GM12878 (cell line): ENCODE measurements at regions of chr7 and their contacts with region 1.

Region 1: GRCh38 chr7:99918959-99919813 is at the start of gene TRIM4:
- DNase-seq: peak; percentile 77
- ATAC-seq: peak; percentile 99
- H3K4me3 ChIP-seq: peak within 1 kb of the TSS; percentile 81
- H3K27ac ChIP-seq: peak within 1 kb of the TSS; percentile 79
- H3K4me1 ChIP-seq: no peaks in the 10 kb centered on the region
- H3K27me3 ChIP-seq: no peaks in the 10 kb centered on the region
- CTCF ChIP-seq: peak; percentile 24 to 28 (median 26); a peak in 4 of 6 replicates
- EP300 ChIP-seq: no peak
- POLR2A ChIP-seq: peak; percentile 99
- RAD21 ChIP-seq: 0 out of 2 replicates have a peak, but pooled peaks have one; percentile 8
- polyA plus RNA-seq, gene TRIM4: 4.8 to 6.0 TPM

Region 2: GRCh38 chr7:99975782-99976521 is 56.8 kb after region 1 on chr7 and contains the start of gene AZGP1:
- CTCF ChIA-PET with region 1: interaction called, 22 read pairs
- POLR2A ChIA-PET with region 1: no interaction called
- RAD21 ChIA-PET with region 1: no interaction called
- SMC1A ChIA-PET with region 1: interaction called, 5 read pairs
- in situ Hi-C with region 1: no loop called
- intact Hi-C with region 1: loop called (anchors 5 kb)
- DNase-seq: no peak
- ATAC-seq: peak; percentile 68
- H3K4me3 ChIP-seq: no peak within 1 kb of the TSS
- H3K27ac ChIP-seq: no peak within 1 kb of the TSS
- H3K4me1 ChIP-seq: no peaks in the 10 kb centered on the region
- H3K27me3 ChIP-seq: no peaks in the 10 kb centered on the region
- CTCF ChIP-seq: no peak
- EP300 ChIP-seq: no peak
- POLR2A ChIP-seq: no peak
- RAD21 ChIP-seq: no peak
- polyA plus RNA-seq, gene AZGP1: not detected

Region 3: DNA sequence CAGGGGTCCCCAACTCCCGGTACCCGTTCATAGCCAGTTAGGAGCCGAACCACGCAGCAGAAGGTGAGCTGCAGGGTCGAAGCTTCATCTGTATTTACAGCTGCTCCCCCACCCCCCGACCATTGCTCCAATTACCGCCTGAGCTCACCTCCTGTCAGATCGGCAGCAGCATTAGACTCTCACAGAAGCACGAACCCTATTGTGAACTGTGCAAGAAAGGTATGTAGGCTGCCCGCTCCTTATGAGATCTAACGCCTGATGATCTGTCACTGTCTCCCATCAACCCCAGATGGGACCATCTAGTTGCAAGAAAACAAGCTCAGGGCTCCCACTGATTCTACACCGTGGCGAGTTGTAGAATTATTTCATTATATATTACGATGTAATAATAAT is 71.3 kb after region 1 on chr7:
- CTCF ChIA-PET with region 1: interaction called, 178 read pairs
- POLR2A ChIA-PET with region 1: interaction called, 5 read pairs
- RAD21 ChIA-PET with region 1: interaction called, 16 read pairs
- SMC1A ChIA-PET with region 1: interaction called, 86 read pairs
- in situ Hi-C with region 1: loop called (anchors 5 kb)
- intact Hi-C with region 1: no loop called
- DNase-seq: no peak
- ATAC-seq: no peak
- H3K4me3 ChIP-seq: no peak overlapping the region
- H3K27ac ChIP-seq: no peak overlapping the region
- H3K4me1 ChIP-seq: no peaks in the 10 kb centered on the region
- H3K27me3 ChIP-seq: peaks cover 0 to 2% of the 10 kb centered on the region in 2 experiments; a peak in 3 of 4 replicates
- CTCF ChIP-seq: no peak
- EP300 ChIP-seq: no peak
- POLR2A ChIP-seq: no peak
- RAD21 ChIP-seq: no peak

Region 4: GRCh38 chr7:99997545-99998137 is 78.5 kb after region 1 on chr7:
- CTCF ChIA-PET with region 1: interaction called, 178 read pairs
- POLR2A ChIA-PET with region 1: interaction called, 5 read pairs
- RAD21 ChIA-PET with region 1: interaction called, 12 read pairs
- SMC1A ChIA-PET with region 1: interaction called, 86 read pairs
- in situ Hi-C with region 1: loop called (anchors 5 kb)
- intact Hi-C with region 1: no loop called
- DNase-seq: no peak
- ATAC-seq: peak; percentile 91
- H3K4me3 ChIP-seq: peak overlapping the region; percentile 51; the same call in 1 of the 2 replicates
- H3K27ac ChIP-seq: no peak overlapping the region
- H3K4me1 ChIP-seq: peaks cover 12% of the 10 kb centered on the region; the same call in 1 of the 2 replicates
- H3K27me3 ChIP-seq: no peaks in the 10 kb centered on the region; a peak in 1 of 4 replicates
- CTCF ChIP-seq: peak; percentile 14 to 24 (median 15); a peak in 2 of 6 replicates
- EP300 ChIP-seq: no peak
- POLR2A ChIP-seq: peak; percentile 85
- RAD21 ChIP-seq: no peak

Region 5: GRCh38 chr7:100049441-100050311 is 130.5 kb after region 1 on chr7 and contains the start of gene ZSCAN21:
- CTCF ChIA-PET with region 1: interaction called, 5 read pairs
- POLR2A ChIA-PET with region 1: no interaction called
- RAD21 ChIA-PET with region 1: interaction called, 4 read pairs
- SMC1A ChIA-PET with region 1: interaction called, 4 read pairs
- in situ Hi-C with region 1: no loop called
- intact Hi-C with region 1: loop called (anchors 5 kb)
- DNase-seq: peak; percentile 25
- ATAC-seq: peak; percentile 95
- H3K4me3 ChIP-seq: peak within 1 kb of the TSS; percentile 83
- H3K27ac ChIP-seq: peak within 1 kb of the TSS; percentile 82
- H3K4me1 ChIP-seq: peaks cover 7% of the 10 kb centered on the region
- H3K27me3 ChIP-seq: no peaks in the 10 kb centered on the region
- CTCF ChIP-seq: peak in 2 of 3 experiments; percentile 15; a peak in 2 of 6 replicates
- EP300 ChIP-seq: no peak
- POLR2A ChIP-seq: peak; percentile 95
- RAD21 ChIP-seq: no peak
- polyA plus RNA-seq, gene ZSCAN21: 1.9 to 3.1 TPM

Region 6: DNA sequence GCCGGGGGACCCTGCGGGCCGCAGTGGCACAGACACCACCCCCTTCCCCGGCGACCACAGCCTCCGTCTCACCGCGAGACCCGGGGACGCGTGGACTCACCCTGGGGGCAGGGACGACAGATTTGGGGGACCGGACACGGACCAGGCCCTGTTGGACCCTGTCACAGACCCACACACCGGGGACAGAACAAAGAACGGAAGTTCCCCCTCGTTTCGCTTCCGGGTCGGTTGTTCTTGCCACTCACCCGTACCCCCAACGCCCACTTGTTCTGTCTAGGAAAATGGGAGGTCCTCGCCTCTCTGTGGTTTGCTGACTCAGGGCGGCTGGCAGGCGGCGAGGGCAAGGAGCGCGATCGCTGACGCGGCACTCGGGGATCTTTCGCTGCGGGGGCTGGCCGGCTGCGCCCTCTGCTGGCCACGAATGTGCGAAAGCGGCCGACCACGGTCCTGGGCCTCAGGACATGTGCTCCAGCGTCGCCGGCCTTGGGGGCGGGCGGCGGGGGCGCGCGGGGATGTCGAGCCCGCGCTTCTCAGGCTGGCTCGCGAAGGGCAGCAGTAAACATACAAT is 162.4 kb after region 1 on chr7 and contains the start of gene ZNF3:
- CTCF ChIA-PET with region 1: interaction called, 8 read pairs
- POLR2A ChIA-PET with region 1: interaction called, 3 read pairs
- RAD21 ChIA-PET with region 1: interaction called, 11 read pairs
- SMC1A ChIA-PET with region 1: interaction called, 4 read pairs
- in situ Hi-C with region 1: no loop called
- intact Hi-C with region 1: loop called (anchors 10 kb)
- DNase-seq: peak; percentile 97
- ATAC-seq: peak; percentile 90
- H3K4me3 ChIP-seq: peak within 1 kb of the TSS; percentile 88
- H3K27ac ChIP-seq: peak within 1 kb of the TSS; percentile 89
- H3K4me1 ChIP-seq: peaks cover 4% of the 10 kb centered on the region
- H3K27me3 ChIP-seq: no peaks in the 10 kb centered on the region
- CTCF ChIP-seq: peak; percentile 84 to 97 (median 89); a peak in 5 of 6 replicates
- EP300 ChIP-seq: peak in 1 of 2 experiments; percentile 60; a peak in 1 of 4 replicates
- POLR2A ChIP-seq: peak; percentile 96
- RAD21 ChIP-seq: peak; percentile 66
- polyA plus RNA-seq, gene ZNF3: 17.2 to 19.0 TPM